AG04449 (cell line): ENCODE measurements at regions of chr2 and their contacts with region 1.

Region 1: DNA sequence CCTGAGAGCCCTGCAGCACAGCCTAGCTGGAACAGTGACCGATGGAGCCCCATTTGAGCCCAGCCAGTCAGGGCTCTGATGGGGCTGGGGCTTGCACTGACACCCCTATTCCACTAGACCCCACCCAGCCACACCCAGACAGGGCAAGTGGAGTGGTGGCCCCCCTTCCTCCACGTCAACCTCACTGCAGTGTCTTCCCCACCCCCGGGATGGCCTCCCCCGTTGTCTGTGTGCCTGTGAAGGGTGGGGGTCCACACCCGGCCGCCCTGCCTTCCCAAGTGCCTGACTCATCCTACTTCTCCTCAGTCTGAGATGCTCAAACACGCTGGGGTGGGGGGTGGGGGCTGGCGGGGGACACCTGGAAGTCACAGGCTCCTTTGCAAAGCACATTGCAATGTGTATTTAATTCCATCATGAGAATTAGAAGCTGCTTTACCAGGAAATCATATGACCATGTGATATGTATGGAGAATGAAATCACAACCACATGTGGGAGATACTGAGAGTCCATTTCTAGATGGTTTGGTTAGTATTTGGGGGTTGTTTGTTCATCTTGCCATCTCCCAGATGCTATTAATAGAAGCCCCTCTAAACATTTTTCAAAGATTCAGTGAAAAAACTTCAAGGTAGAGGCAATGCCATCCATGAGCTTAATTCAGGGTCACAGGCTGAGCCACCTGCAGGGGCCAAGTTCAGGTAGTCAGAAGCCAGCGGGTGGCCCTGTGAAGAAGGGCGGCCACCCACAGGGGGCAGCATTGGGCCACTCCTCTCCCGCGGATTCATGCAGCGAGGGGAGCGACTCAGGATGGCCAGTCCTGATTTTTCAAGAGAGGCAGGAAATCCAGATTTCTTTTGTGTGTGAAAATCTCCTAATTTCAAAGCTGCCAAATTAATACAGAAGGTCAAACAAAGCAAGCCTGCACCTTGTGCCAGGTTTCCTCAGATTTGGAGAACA is 22.7 kb upstream of the GMPPA start:
- DNase-seq: no peak
- H3K4me3 ChIP-seq: no peak overlapping the region
- CTCF ChIP-seq: peak; percentile 86

Region 2: DNA sequence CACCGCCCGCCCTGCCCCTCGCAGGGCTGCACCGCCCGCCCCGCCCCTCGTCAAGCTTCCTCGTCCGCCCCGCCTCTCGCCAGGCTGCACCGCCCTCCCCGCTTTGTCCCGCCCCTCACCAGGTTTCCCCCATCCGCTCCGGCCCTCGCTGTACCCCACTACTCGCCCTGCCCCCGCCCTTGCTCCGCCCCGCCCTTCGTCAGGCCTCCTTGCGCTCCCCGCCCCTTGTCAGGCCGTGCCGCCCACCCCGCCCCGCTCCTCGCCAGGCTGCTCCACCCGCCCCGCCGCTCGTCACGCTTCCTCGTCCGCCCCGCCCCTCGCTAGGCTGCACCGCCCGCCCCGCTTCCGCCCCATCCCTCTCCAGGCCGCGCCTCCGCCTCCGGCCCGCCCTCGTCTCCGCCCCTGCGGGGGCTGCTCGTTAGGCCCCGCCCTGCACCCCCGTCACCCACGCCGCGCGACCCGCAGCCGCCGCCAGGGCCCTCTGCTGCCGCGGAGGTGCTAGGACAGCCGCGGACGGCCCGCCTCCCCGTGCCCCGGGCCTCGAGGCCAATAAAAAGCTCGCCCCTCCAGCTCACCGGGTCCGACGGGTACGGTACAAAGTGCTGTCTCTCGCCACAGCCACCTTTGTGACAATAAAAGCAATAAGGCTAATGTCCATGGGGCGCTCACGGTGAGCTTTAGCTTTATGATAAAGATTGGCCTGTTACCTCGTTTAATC is 87.7 kb before region 1 on chr2:
- CTCF ChIA-PET with region 1: interaction called, 10 read pairs
- POLR2A ChIA-PET with region 1: no interaction called
- DNase-seq: peak; percentile 73
- H3K4me3 ChIP-seq: peak overlapping the region; percentile 56
- CTCF ChIP-seq: peak; percentile 60

Region 3: DNA sequence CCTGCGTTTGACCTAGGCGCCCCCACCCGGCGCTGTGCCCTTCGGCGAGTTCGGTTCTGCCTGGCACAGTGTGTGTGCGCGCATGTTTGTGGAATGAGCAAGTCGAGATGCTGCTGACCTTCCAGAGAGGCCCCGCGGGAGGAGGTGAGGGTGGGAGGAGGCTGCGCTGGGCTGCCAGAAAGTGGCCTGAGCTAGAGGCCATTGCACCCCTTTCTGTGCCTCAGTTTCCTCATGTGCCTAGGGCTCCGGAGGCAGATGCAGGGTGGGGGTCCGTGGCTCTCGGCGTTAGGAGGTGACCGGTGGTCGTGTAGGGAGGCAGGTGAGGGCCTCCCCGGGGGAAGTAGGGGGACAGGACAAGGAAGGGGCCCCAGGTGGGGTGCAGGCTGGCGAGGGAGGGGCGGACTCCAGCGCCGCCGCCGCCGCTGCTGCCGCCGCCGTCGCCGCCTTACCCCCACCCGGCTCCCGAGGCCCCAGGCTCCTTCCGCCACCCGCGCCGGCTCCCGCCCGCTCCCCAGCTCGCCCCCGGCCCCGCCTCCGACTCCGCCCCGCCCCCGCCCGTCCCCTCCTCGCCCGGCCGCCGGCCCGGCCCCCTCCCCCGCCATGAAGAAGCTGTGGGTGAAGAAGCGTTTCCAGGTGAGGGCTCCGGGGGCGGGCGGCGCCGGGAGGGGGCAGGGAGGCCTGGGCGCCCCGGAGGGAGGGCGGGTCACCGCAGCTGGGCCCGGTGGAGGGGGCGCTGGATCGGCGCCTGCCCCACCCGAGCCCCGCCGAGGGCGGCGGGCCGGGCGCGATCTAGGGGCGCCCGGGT is 34.3 kb before region 1 on chr2:
- CTCF ChIA-PET with region 1: interaction called, 23 read pairs
- POLR2A ChIA-PET with region 1: interaction called, 4 read pairs
- DNase-seq: no peak
- H3K4me3 ChIP-seq: peak overlapping the region; percentile 66
- CTCF ChIP-seq: no peak

Region 4: GRCh38 chr2:219459460-219460311 is 16.3 kb before region 1 on chr2:
- CTCF ChIA-PET with region 1: interaction called, 238 read pairs
- POLR2A ChIA-PET with region 1: interaction called, 4 read pairs
- DNase-seq: no peak
- H3K4me3 ChIP-seq: no peak overlapping the region
- CTCF ChIP-seq: peak; percentile 96

Region 5: GRCh38 chr2:219509780-219510511 is 34.0 kb after region 1 on chr2:
- CTCF ChIA-PET with region 1: interaction called, 11 read pairs
- POLR2A ChIA-PET with region 1: no interaction called
- DNase-seq: no peak
- H3K4me3 ChIP-seq: peak overlapping the region; percentile 45
- CTCF ChIP-seq: peak; percentile 88

Region 6: GRCh38 chr2:219521066-219521880 is 45.3 kb after region 1 on chr2:
- CTCF ChIA-PET with region 1: interaction called, 178 read pairs
- POLR2A ChIA-PET with region 1: no interaction called
- DNase-seq: no peak
- H3K4me3 ChIP-seq: no peak overlapping the region; the same call in none of the 2 replicates
- CTCF ChIP-seq: peak; percentile 94

Region 7: DNA sequence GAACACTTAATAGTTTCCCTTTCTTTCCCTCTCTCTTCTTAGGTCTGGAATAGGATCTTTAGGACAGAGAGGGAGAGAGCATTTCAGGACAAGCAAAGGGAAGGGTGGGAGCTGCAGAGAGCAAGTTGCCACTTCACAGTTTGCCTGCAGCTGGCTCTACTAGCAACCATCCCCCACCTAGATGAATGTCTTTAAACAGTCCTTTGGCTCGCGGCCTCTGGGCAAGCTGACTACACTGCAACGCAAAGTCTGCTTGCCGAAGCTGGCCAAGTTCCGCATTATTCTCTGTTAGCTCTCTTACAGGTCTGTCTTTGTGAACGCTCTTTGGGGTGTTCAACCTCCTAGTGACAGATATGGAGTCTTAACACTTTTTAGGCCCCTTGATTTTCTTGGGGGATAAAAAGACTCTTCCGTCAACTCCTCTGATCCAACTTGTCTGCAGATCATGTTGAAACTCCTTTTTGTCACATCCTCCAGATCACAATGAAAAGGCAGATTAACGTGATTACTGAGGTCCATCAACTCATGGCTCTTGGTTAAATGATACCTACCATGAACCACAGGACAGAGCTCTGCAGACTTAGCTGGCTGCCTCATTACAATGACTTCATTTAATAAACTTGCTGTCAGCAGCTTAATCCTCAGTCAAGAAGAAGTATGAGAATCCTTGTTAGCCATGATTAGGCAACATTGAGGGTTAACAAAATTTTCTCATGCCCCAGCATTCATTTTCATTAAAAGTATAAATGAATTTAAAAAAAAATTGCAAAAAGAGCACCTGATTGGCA is 226.1 kb after region 1 on chr2:
- CTCF ChIA-PET with region 1: no interaction called
- POLR2A ChIA-PET with region 1: no interaction called
- DNase-seq: no peak
- H3K4me3 ChIP-seq: no peak overlapping the region
- CTCF ChIP-seq: no peak